ENCODE measurements at regions of chr12 and their contacts with region 1.

Region 1: GRCh38 chr12:92145731-92146496 is at the start of gene BTG1:
- DNase-seq: peak; percentile 89
- ATAC-seq: peak; percentile 75
- H3K4me3 Mint-ChIP-seq: peak within 1 kb of the TSS; percentile 98
- H3K27ac Mint-ChIP-seq: peak within 1 kb of the TSS; percentile 99
- H3K4me1 Mint-ChIP-seq: peaks cover 39% of the 10 kb centered on the region
- H3K27me3 Mint-ChIP-seq: no peaks in the 10 kb centered on the region
- CTCF ChIP-seq: no peak
- total RNA-seq, gene BTG1: 423 and 429 TPM in 2 replicates

Region 2: DNA sequence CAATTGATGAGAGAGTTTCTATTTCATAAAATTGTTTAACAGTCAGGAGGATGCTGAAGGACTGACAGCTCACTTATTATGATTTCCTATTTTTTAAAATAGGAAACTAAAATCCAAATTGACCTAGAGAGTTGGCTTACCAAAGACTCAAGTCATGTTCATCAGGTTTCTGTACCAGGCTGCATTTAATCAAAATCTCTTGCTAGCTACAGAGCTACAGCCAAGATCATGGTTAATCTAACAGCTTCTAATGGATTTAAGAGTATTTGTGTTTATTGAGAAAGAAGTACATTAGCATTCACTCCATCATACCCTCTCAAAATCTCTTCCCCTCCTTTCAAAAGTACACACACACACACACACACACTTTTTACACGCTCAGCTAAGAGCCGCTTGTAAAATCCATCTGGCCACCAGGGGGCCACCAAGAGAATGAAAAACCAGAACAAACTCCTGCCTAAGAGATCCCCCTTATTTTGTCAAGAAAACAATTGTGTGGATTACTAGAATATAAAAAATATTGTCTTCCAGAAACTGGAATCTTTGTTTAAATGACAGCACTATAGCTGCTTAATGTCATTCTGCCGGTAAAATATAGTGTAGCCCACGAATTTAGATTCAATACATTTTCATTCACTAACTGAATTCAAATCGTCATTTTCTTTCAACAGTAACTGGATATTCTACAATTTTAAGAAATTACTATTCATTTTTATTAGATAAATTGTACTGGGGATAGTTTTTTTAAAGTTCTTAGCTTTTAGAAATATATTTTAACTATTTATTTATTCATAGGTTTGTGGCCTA is 334.2 kb before region 1 on chr12:
- CTCF ChIA-PET with region 1: interaction called, 36 read pairs
- POLR2A ChIA-PET with region 1: interaction called, 36 read pairs
- intact Hi-C with region 1: loop called (anchors 1 kb)
- DNase-seq: peak; percentile 57
- ATAC-seq: peak; percentile 71
- H3K4me3 Mint-ChIP-seq: no peak overlapping the region
- H3K27ac Mint-ChIP-seq: no peak overlapping the region
- H3K4me1 Mint-ChIP-seq: peaks cover 7% of the 10 kb centered on the region
- H3K27me3 Mint-ChIP-seq: no peaks in the 10 kb centered on the region
- CTCF ChIP-seq: no peak

Region 3: DNA sequence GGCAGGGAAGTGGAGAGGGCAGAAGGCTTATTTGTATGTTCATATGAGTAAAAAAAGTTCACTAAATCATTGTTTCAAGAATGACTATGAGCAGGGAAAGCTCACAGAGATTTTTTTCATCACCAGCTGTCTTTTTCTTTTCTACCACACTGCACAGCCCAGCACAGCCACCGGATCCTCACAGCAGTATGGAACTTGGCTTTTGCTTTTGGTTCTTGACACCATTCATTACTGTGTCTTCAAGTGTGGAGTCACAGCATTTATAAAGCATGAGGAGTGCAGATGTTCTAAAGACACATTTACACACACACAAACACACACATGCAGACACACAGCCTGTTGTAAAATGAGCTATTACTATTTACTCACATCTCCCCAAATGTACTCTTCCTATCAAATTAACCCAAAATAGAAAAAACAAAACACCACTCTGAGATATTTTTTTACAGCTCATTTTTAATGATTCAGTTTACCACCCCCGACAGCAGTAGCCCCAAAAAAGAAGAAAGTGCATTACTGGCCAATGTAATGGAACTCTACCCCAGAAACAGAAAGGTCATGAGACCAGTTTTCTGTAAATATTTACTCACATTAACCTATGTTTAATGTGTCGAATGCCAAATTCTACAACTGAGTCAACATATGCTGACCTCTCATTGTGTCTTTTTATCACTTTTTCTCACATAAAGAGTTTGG is 60.7 kb before region 1 on chr12:
- CTCF ChIA-PET with region 1: no interaction called
- POLR2A ChIA-PET with region 1: no interaction called
- intact Hi-C with region 1: no loop called
- DNase-seq: no peak
- ATAC-seq: no peak
- H3K4me3 Mint-ChIP-seq: no peak overlapping the region
- H3K27ac Mint-ChIP-seq: no peak overlapping the region
- H3K4me1 Mint-ChIP-seq: peaks cover 22% of the 10 kb centered on the region
- H3K27me3 Mint-ChIP-seq: no peaks in the 10 kb centered on the region
- CTCF ChIP-seq: no peak

Region 4: GRCh38 chr12:92158796-92159439 is 13.0 kb after region 1 on chr12:
- CTCF ChIA-PET with region 1: interaction called, 4 read pairs
- POLR2A ChIA-PET with region 1: interaction called, 351 read pairs
- intact Hi-C with region 1: loop called (anchors 1 kb)
- DNase-seq: no peak
- ATAC-seq: peak; percentile 65
- H3K4me3 Mint-ChIP-seq: peak overlapping the region; percentile 76
- H3K27ac Mint-ChIP-seq: peak overlapping the region; percentile 96
- H3K4me1 Mint-ChIP-seq: peaks cover 93% of the 10 kb centered on the region
- H3K27me3 Mint-ChIP-seq: no peaks in the 10 kb centered on the region
- CTCF ChIP-seq: no peak

Region 5: DNA sequence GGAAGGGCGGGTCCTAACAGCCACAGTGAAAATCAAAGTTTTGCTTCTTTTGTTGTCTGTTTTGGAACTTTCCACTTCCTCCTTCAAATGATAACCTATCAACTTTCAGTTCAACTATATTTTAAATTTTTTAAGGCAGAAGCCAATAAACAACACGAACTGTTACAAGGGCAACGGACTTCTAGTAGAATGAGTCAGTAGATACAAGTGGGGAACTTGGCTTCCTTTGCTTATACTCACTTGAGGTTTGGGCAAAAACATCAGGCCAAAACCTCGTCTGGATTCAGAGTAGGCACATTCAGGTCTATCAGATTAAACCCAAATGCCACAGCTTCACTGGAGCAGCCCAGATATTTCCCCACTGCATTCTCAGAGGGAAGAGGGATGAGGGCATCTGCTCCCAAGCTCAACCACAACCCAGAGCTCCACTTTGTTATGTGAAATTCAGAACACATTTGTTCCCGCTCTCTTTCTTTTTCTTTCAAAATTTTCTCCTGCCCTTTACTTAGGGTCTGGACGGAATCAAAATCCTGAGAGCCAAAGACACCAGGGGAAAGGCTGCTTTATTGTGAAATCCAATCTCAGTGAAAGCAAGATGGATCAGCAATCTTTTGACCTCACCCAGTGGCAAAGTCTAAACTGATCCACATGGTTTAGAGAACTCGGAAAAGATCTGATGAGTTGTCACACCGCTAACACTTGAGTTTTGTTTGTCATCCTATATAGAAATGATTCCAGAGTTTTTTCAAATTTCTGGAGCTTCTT is 152.2 kb after region 1 on chr12:
- CTCF ChIA-PET with region 1: no interaction called
- POLR2A ChIA-PET with region 1: interaction called, 16 read pairs
- intact Hi-C with region 1: loop called (anchors 2 kb)
- DNase-seq: no peak
- ATAC-seq: peak; percentile 85
- H3K4me3 Mint-ChIP-seq: peak overlapping the region; percentile 48
- H3K27ac Mint-ChIP-seq: peak overlapping the region; percentile 80
- H3K4me1 Mint-ChIP-seq: peaks cover 2% of the 10 kb centered on the region
- H3K27me3 Mint-ChIP-seq: no peaks in the 10 kb centered on the region
- CTCF ChIP-seq: no peak

Region 6: DNA sequence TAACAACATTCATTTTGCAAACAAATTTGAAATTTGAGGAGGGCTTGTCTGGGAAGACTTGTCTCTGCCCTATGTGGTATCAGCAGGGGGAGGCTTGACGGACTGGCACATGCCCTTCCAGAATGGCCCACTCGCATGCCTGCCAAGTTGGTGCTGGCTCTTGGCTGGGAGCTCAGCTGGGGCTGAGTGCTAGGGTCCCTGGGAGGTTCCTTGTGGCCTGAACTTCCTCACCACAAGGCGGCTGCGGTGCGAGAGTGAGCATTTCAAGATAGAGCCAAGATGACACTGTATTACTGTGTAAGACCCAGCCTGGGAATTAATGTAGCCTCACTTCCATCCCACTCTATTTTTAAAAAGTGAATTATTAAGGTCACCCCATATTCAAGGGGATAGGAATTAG is 285.2 kb after region 1 on chr12:
- CTCF ChIA-PET with region 1: no interaction called
- POLR2A ChIA-PET with region 1: interaction called, 69 read pairs
- intact Hi-C with region 1: no loop called
- DNase-seq: peak; percentile 27
- ATAC-seq: peak; percentile 60
- H3K4me3 Mint-ChIP-seq: no peak overlapping the region
- H3K27ac Mint-ChIP-seq: peak overlapping the region; percentile 94
- H3K4me1 Mint-ChIP-seq: peaks cover 80% of the 10 kb centered on the region
- H3K27me3 Mint-ChIP-seq: no peaks in the 10 kb centered on the region
- CTCF ChIP-seq: no peak

Region 7: DNA sequence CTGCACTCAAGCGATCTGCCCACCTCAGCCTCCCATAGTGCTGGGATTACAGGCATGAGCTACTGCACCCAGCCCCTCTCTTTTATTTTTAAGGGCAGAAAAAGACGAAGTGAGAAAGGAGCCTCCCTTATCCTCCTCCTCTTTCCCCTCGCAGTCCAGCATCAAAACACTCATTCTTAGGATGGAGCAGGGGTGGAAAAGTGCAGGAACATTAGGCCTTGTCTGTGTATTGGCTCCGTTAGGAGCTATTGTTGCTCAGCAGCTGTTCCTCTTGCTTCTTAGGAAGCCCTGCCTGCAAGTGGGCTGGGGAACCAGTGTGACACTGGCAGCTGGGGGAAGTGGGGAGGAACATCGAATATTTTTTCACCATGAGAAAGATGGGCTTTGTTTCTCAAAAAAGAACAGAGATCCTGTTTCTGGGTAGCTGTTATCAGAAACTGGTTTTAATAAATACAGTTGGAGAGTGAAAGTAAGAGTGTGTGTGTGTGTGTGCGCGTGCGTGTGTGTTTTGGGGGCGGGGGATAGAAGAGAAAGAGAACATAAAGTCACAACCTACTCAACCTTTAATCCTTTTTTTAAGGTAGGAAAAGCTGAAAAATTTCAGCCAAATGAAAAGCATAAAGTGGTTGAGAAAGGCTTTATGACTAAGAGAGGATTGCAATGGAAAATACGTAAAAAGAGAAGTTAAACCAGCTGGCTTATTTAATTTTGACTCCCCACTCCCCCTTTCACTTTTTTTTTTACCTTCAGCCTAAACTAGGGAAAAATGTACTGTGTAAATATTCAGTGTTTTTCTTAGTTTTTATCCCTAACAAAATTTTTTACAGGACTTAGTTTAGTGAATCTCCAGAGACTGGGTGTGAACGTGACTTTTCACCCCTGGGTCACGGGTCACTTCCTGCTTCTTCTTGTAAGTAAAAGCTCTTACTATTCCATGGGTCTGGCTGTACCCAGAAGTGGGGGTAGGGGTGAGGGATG is 359.6 kb after region 1 on chr12:
- CTCF ChIA-PET with region 1: interaction called, 5 read pairs
- POLR2A ChIA-PET with region 1: interaction called, 167 read pairs
- intact Hi-C with region 1: loop called (anchors 1 kb)
- DNase-seq: peak; percentile 20
- ATAC-seq: peak; percentile 47
- H3K4me3 Mint-ChIP-seq: peak overlapping the region; percentile 77
- H3K27ac Mint-ChIP-seq: peak overlapping the region; percentile 94
- H3K4me1 Mint-ChIP-seq: peaks cover 64% of the 10 kb centered on the region
- H3K27me3 Mint-ChIP-seq: no peaks in the 10 kb centered on the region
- CTCF ChIP-seq: no peak

Region 8: DNA sequence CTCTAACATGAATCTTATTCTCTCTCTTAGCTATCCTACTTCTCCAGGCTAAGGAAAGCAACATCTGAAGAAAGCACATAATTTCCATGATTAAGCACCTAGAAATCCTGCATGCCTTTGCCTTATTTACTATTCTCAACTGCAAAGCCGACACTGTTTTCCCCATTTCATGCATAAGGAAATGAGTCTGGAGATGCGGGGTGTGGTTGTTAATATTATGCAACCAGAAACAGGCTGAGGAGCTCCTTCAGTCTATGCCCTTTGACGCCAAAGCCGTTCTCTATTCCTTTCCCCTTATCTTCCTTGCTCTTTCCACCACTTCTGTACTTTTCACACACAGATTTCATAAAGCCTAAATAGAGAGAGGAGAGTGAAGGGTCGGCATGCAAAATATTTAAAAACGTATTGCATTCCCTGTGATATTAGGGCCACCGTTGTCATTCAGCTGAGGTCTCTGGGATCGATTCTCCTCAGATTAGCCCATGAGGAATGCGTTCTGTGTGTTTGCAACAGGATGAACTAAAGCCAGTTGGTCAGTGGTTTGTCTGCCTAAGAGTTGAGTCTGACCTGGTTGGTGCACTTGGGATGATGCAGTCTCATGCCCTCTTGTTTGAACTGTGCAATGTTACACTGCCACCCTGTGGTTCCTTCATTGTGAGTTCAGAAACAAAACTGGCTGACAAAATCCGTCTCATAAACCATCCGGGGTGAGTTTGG is 503.8 kb after region 1 on chr12:
- CTCF ChIA-PET with region 1: no interaction called
- POLR2A ChIA-PET with region 1: no interaction called
- intact Hi-C with region 1: loop called (anchors 1 kb)
- DNase-seq: no peak
- ATAC-seq: peak; percentile 78
- H3K4me3 Mint-ChIP-seq: no peak overlapping the region
- H3K27ac Mint-ChIP-seq: no peak overlapping the region
- H3K4me1 Mint-ChIP-seq: peaks cover 6% of the 10 kb centered on the region
- H3K27me3 Mint-ChIP-seq: no peaks in the 10 kb centered on the region
- CTCF ChIP-seq: peak; percentile 26